Endothelial cell of umbilical vein (primary cell): ENCODE measurements at regions of chr9 and their contacts with region 1.

Region 1: GRCh38 chr9:120868676-120869359 is 8.2 kb downstream of the PHF19 start:
- DNase-seq: peak; percentile 86
- H3K4me3 ChIP-seq: peak overlapping the region in 2 of 3 experiments; percentile 19 to 58
- H3K27ac ChIP-seq: no peak overlapping the region
- H3K4me1 ChIP-seq: peaks cover 13% of the 10 kb centered on the region
- H3K27me3 ChIP-seq: no peaks in the 10 kb centered on the region
- CTCF ChIP-seq: peak; percentile 27 to 41
- POLR2A ChIP-seq: no peak

Region 2: DNA sequence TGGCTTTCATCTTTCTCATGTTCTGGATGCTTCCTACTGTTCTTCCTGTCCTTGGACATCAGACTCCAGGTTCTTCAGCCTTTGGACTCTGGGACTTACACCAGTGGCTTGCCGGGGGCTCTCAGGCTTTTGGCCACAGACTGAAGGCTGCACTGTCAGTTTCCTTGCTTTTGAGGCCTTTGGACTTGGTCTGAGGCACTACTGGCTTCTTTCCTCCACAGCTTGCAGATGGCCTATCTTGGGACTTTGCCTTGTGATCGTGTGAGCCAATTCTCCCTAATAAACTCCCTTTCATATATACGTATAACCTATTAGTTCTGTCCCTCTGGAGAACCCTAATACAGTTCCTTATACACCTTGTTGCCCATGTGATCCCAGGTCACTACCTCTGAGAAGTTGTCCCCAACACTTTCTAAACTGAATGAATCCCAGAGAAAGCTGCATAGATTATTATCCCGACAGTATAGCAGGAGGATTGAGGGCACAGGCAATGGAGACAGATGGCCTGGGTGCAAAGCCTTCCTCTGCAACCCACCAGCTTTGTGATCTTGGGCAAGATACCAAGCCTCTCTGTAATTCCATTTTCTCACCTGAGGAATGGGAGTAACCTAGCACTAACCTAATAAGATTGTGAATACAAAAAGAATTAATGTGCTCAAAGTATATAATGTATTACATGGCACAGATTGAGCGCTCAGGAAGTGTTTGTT is 1049.9 kb before region 1 on chr9:
- CTCF ChIA-PET with region 1: no interaction called
- POLR2A ChIA-PET with region 1: no interaction called
- dilution Hi-C with region 1: no loop called
- intact Hi-C with region 1: no loop called
- DNase-seq: no peak
- H3K4me3 ChIP-seq: no peak overlapping the region
- H3K27ac ChIP-seq: no peak overlapping the region
- H3K4me1 ChIP-seq: no peaks in the 10 kb centered on the region
- H3K27me3 ChIP-seq: no peaks in the 10 kb centered on the region
- CTCF ChIP-seq: no peak
- POLR2A ChIP-seq: no peak

Region 3: GRCh38 chr9:120792898-120793765 is 75.7 kb before region 1 on chr9 and contains the start of gene FBXW2:
- CTCF ChIA-PET with region 1: no interaction called
- POLR2A ChIA-PET with region 1: no interaction called
- dilution Hi-C with region 1: no loop called
- intact Hi-C with region 1: loop called (anchors 2 kb)
- DNase-seq: peak; percentile 92
- H3K4me3 ChIP-seq: peak within 1 kb of the TSS; percentile 78 to 83 (median 82)
- H3K27ac ChIP-seq: peak within 1 kb of the TSS; percentile 64
- H3K4me1 ChIP-seq: peaks cover 27% of the 10 kb centered on the region
- H3K27me3 ChIP-seq: no peaks in the 10 kb centered on the region
- CTCF ChIP-seq: no peak
- POLR2A ChIP-seq: peak; percentile 95
- total RNA-seq, gene FBXW2: 70.2 and 72.3 TPM in 2 replicates